ENCODE measurements at regions of chr19 and their contacts with region 1.

Region 1: GRCh38 chr19:17859533-17860330 is at the start of gene RPL18A:
- DNase-seq: peak; percentile 100
- total RNA-seq, gene RPL18A: 669 TPM

Region 2: DNA sequence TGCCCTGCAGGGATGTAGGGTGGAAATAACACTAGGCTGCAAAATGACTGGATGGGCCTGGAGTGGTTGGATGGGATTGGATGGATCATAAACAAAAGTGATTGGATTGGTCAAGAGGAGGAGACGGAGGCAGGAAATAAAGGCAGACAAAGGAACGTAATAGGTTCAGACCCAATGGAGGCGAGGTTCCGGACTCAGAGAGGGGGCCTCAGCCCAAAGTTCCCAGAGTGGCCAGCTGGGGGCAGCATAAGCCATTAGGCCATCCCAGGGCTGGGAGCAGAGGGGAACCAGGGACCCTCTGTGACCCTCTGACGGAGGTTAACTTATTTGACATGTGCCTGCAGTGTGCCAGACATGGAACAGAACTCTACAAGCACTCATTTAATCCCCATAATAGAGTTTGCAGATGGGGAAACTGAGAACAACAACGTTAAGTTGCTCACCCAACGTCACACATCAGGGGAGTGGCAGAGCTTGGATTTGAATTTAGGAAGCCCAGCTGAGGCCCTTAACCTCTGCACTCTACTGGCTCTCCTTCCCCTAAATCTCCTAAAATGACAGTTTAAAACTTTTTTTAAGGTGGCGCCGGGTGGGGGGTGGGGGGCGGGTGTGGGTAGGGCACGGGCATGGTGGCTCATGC is 155.8 kb before region 1 on chr19:
- intact Hi-C with region 1: loop called (anchors 10 kb)
- DNase-seq: peak; percentile 84

Region 3: DNA sequence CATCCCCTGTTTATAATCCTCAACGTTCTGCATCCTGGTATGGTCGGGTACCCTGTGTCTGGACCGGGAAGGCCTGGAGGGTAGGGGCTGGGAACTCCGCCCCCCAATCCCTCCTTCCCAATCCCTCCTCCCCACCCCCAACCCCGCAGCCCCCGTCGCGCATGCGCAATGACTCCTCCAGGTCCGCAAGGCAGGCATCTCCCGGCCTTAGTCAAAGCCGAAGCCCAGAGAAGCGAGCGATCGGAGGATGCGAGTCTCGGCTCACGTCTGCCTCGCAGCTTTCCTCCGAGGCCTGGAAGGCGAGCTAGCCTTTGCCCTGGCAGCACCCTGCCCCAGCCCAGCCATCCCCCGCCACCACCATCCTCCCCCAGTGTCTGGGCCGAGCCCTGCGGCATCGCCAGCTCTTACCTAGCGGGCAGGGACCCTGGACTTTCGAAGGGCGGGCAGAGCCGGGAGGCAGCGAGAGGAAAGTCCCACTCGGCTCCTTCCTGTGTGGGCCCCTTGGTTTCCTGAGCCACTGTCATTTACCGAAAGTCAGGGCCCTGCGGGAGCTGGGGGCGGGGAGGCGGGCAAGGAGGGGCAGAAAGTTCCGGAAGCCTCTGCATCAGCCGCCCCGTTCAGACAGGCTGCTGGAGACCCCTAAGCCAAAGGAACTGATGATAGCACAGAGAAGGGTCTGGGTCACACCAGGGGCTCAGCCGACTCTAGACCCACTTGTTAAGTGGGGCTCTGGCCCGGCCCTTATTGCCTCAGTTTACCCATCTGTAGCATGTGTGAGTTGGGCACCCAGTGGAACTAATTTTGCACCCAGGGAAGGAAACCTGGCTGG is 12.0 kb before region 1 on chr19 and contains the start of gene JAK3:
- intact Hi-C with region 1: no loop called
- DNase-seq: peak; percentile 91
- total RNA-seq, gene JAK3: 6.2 TPM

Region 4: DNA sequence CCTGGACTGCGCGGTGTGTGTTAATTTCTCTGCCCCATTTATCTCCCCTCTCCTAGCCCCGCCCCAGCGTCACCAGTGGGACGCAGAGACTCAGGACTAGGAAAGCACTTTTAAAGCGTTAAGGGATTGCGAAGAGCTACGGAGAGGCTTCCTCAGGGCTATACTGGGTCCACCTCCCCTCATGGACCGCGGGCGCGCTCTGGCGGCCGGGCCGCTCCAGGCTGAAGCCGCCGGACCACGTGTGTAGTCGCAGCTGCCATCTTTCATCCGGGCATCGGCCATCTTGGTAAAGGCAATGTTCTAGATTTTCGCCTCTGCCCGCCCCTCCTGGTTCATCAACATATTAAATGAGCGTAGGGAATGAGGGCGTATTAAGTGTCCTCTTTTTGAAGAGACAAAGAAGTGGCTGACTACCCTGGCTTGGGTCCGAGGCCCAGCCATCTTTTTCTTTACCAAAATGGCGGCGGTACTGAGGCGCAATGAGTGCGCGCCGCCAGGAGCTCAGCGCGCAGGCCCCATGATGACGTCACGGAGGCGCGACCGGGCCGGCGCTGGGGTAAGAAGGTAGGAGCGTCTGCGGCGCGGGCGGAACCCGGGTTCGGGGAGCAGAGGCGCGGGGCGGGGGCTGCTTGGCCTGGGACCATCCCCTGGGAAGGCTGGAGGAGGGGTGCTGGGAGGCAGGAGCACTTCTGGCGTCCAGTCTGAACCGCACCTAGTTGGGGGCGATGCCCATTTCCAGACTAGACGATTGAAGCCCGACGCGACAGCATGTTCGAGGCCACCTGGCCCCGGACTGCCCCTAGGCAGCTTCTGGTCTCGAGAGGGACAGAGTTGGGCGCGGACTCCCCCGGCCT is 73.0 kb after region 1 on chr19 and contains the start of gene CCDC124:
- intact Hi-C with region 1: loop called (anchors 1 kb)
- DNase-seq: peak; percentile 94
- total RNA-seq, gene CCDC124: 71.3 TPM

Region 5: GRCh38 chr19:17996826-17997316 is 137.1 kb after region 1 on chr19:
- intact Hi-C with region 1: loop called (anchors 2 kb)
- DNase-seq: peak; percentile 94

Measured in cardiac septum (tissue), 1 donor.